Esophagus muscularis mucosa (tissue), 4 donors: ENCODE measurements at regions of chr3 and their contacts with region 1.

Region 1: GRCh38 chr3:190120269-190121060 is at the start of gene P3H2:
- DNase-seq: peak; percentile 93
- H3K4me3 ChIP-seq: peak within 1 kb of the TSS; percentile 73 to 92 (median 77)
- H3K27ac ChIP-seq: peak within 1 kb of the TSS; percentile 85 to 94 (median 90)
- H3K4me1 ChIP-seq: peaks cover 10 to 55% (median 43%) of the 10 kb centered on the region in 4 donors
- H3K27me3 ChIP-seq: no peaks in the 10 kb centered on the region
- CTCF ChIP-seq: peak; percentile 55 to 71 (median 70)
- EP300 ChIP-seq: no peak
- POLR2A ChIP-seq: no peak
- total RNA-seq, gene P3H2: 15.6 to 41.5 (median 27.1) TPM

Region 2: DNA sequence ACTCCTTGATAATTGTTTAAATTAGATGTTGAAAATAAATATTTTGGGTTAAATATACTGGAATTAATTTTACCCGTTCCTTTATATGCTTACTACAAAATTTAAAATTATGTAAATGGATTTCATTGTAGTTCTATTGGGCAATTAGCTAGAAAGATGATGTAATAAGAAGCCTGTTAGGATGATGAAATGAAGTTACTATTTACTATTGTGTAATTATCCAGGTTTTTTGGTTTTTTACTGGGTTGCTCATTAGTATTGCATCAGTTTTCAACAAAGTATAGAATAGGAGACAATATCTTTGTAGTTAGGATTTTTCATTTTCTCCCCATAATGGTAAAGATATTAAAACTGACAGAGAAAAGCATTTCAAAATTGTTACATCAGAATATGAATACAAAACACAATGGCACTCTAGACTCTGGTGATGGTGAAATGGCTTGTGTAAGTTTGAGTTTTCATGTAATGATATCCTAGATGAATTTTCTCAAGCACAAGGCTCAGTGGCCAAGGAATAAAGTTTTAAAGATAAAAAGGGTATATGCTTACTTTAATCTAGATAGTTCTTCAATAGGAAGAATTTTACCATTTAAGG is 221.8 kb before region 1 on chr3:
- intact Hi-C with region 1: no loop called
- DNase-seq: no peak
- H3K4me3 ChIP-seq: no peak overlapping the region
- H3K27ac ChIP-seq: no peak overlapping the region
- H3K4me1 ChIP-seq: no peaks in the 10 kb centered on the region
- H3K27me3 ChIP-seq: no peaks in the 10 kb centered on the region
- CTCF ChIP-seq: no peak
- EP300 ChIP-seq: no peak
- POLR2A ChIP-seq: no peak

Region 3: GRCh38 chr3:190205739-190206138 is 85.3 kb after region 1 on chr3:
- intact Hi-C with region 1: loop called (anchors 5 kb)
- DNase-seq: no peak
- H3K4me3 ChIP-seq: no peak overlapping the region
- H3K27ac ChIP-seq: no peak overlapping the region
- H3K4me1 ChIP-seq: no peaks in the 10 kb centered on the region
- H3K27me3 ChIP-seq: no peaks in the 10 kb centered on the region
- CTCF ChIP-seq: no peak
- EP300 ChIP-seq: no peak
- POLR2A ChIP-seq: no peak